ENCODE measurements at regions of chr2 and their contacts with region 1.

Region 1: DNA sequence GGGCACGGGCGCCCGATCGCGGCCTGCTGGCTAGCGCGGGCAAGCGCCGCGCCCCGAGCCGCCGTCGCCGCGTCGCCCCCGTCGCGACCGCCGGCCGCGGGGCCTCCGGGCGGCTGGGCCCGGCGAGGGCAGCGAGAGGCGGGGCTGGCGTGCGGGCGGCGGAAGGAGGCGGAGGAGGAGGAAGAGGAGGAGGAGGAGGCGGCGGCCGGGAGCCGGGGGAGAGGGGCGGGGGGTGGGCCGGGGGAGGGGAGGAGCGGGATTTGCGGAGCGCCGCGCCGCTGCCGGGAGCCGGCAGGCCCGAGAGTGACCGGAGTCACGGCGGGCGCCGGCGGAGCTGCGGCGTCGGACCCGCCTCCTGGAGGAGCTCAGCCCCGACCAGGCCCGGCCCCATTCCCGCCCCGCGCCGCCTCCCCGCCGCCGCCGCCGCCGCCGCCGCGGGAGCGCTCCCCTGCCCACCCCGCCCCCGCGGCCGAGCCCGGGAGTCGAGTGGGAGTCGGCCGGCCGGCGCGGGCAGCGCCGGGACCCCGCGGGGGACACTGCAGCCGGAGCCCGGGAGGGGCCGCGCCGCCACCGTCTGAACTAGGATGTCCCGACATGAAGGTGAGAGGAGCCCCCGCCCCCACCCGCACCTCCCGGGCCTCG is at the start of gene KCMF1:
- DNase-seq: peak; percentile 77
- ATAC-seq: peak; percentile 56
- H3K4me3 Mint-ChIP-seq: peak within 1 kb of the TSS; percentile 97
- H3K27ac Mint-ChIP-seq: peak within 1 kb of the TSS; percentile 98
- H3K4me1 Mint-ChIP-seq: peaks cover 57% of the 10 kb centered on the region
- H3K27me3 Mint-ChIP-seq: no peaks in the 10 kb centered on the region
- CTCF ChIP-seq: no peak
- total RNA-seq, gene KCMF1: 77.1 and 96.6 TPM in 2 replicates

Region 2: DNA sequence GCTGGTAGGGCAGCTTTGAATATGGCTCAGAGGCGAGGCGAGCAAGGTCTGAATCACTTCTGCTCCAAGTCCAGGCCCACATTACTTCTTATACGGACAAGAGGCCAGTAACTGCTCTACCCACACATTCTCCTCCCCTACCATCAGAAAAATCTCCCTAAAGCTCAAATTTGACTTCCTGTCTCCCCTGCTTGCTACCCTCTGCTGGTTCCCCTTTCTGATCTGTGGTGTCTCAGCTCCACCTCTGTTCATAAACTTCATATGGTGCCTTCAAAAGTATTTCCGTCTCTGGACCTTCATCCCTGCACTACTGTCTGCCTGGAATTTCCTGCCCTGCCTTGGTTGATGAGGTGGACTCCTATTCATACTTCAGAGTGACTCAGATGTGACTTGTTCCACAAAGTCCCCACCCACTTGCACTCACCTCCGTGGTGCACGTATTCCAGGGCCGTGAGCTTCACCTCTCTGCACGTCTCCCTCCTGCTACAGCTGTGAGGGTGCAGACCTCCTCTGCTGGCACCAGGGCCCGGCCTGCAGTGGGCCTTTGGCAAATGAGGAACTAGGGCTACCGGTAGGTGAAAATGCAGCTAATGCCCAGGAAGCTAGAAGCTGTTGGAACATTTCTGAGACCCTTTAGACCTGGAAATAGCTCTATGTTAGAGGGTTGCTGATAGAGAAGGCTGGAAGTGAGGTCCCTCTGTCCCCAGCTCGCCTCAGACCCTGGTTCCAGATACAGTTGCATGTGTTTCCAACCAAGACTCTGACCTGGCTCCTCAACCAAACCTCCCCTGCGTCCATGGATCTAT is 24.6 kb before region 1 on chr2:
- CTCF ChIA-PET with region 1: interaction called, 24 read pairs
- POLR2A ChIA-PET with region 1: interaction called, 302 read pairs
- intact Hi-C with region 1: loop called (anchors 1 kb)
- DNase-seq: peak; percentile 44
- ATAC-seq: peak; percentile 77
- H3K4me3 Mint-ChIP-seq: peak overlapping the region; percentile 72
- H3K27ac Mint-ChIP-seq: peak overlapping the region; percentile 97
- H3K4me1 Mint-ChIP-seq: peaks cover 54% of the 10 kb centered on the region
- H3K27me3 Mint-ChIP-seq: no peaks in the 10 kb centered on the region
- CTCF ChIP-seq: no peak

Region 3: DNA sequence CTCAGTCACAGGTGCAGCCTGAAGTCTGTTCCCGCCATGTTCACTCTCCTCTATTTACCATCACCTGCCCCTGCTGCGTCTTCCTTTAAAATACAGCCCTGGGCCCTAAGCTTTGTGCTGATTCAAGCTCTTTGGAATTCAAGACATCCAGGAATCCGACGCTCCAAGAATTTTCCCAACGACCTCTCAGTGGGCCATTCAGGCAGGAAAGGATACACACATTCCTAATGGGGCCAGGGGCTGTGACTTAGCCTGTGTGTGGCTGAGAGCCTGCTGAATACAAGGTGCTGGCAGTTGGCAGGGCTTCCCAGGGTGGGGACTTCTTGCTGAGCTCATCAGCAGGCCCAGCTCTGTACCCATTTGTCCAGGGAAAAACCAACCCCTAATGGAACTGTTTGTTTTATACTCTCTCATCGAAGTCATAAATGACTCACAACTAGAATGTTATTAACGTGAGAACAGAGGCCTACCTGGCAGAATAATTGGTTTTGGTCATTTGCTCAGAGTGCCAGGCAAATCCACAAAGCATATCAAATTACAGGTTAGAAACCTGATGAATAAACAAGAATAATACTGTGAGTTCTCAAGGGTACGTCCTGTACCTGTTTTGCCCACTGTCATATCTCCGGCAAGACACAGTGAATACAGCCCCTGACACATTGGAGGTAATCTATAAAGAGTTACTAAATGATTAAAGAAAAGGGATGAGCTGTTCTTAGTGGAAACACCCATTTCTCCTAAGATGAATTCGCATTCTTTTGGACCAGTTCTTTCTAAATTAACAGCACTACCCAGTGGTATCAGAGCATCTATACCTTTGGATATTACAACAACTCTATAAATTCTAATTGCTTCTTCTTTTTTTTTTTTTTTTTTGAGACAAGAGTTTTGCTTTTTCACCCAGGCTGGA is 12.6 kb before region 1 on chr2:
- CTCF ChIA-PET with region 1: interaction called, 3 read pairs
- POLR2A ChIA-PET with region 1: interaction called, 23 read pairs
- intact Hi-C with region 1: loop called (anchors 1 kb)
- DNase-seq: no peak
- ATAC-seq: peak; percentile 11
- H3K4me3 Mint-ChIP-seq: no peak overlapping the region
- H3K27ac Mint-ChIP-seq: peak overlapping the region; percentile 42
- H3K4me1 Mint-ChIP-seq: peaks cover 44% of the 10 kb centered on the region
- H3K27me3 Mint-ChIP-seq: no peaks in the 10 kb centered on the region
- CTCF ChIP-seq: no peak

Region 4: GRCh38 chr2:84991404-84992151 is 20.6 kb after region 1 on chr2:
- CTCF ChIA-PET with region 1: no interaction called
- POLR2A ChIA-PET with region 1: no interaction called
- intact Hi-C with region 1: no loop called
- DNase-seq: no peak
- ATAC-seq: no peak
- H3K4me3 Mint-ChIP-seq: no peak overlapping the region
- H3K27ac Mint-ChIP-seq: no peak overlapping the region
- H3K4me1 Mint-ChIP-seq: peaks cover 29% of the 10 kb centered on the region
- H3K27me3 Mint-ChIP-seq: no peaks in the 10 kb centered on the region
- CTCF ChIP-seq: no peak

Region 5: GRCh38 chr2:85017411-85018048 is 46.5 kb after region 1 on chr2:
- CTCF ChIA-PET with region 1: interaction called, 5 read pairs
- POLR2A ChIA-PET with region 1: interaction called, 9 read pairs
- intact Hi-C with region 1: loop called (anchors 2 kb)
- DNase-seq: no peak
- ATAC-seq: no peak
- H3K4me3 Mint-ChIP-seq: no peak overlapping the region
- H3K27ac Mint-ChIP-seq: peak overlapping the region; percentile 11
- H3K4me1 Mint-ChIP-seq: peaks cover 61% of the 10 kb centered on the region
- H3K27me3 Mint-ChIP-seq: no peaks in the 10 kb centered on the region
- CTCF ChIP-seq: no peak

Measured in activated B cell treated with CpG ODN at 0.5 μM for 24 hours (primary cell).